ENCODE measurements at regions of chr7 and their contacts with region 1.

Region 1: GRCh38 chr7:43906331-43907010 is at the start of gene URGCP:
- DNase-seq: peak; percentile 26
- H3K4me3 ChIP-seq: peak within 1 kb of the TSS; percentile 59 to 72 (median 69)
- H3K27ac ChIP-seq: peak within 1 kb of the TSS; percentile 19
- H3K4me1 ChIP-seq: peaks cover 8% of the 10 kb centered on the region
- H3K27me3 ChIP-seq: no peaks in the 10 kb centered on the region
- CTCF ChIP-seq: no peak
- POLR2A ChIP-seq: peak; percentile 75
- total RNA-seq, gene URGCP: 25.3 and 26.8 TPM in 2 replicates

Region 2: GRCh38 chr7:43572516-43573049 is 333.9 kb before region 1 on chr7:
- CTCF ChIA-PET with region 1: no interaction called
- POLR2A ChIA-PET with region 1: no interaction called
- dilution Hi-C with region 1: no loop called
- intact Hi-C with region 1: loop called (anchors 5 kb)
- DNase-seq: peak; percentile 80
- H3K4me3 ChIP-seq: no peak overlapping the region
- H3K27ac ChIP-seq: peak overlapping the region; percentile 79
- H3K4me1 ChIP-seq: peaks cover 7% of the 10 kb centered on the region
- H3K27me3 ChIP-seq: no peaks in the 10 kb centered on the region
- CTCF ChIP-seq: no peak
- POLR2A ChIP-seq: peak; percentile 13

Region 3: GRCh38 chr7:43758029-43758821 is 148.2 kb before region 1 on chr7 and contains the start of gene BLVRA:
- CTCF ChIA-PET with region 1: no interaction called
- POLR2A ChIA-PET with region 1: no interaction called
- dilution Hi-C with region 1: no loop called
- intact Hi-C with region 1: no loop called
- DNase-seq: peak; percentile 56
- H3K4me3 ChIP-seq: peak within 1 kb of the TSS; percentile 49 to 72 (median 68)
- H3K27ac ChIP-seq: peak within 1 kb of the TSS; percentile 1
- H3K4me1 ChIP-seq: peaks cover 4% of the 10 kb centered on the region
- H3K27me3 ChIP-seq: peaks cover 0 to 3% of the 10 kb centered on the region in 2 experiments
- CTCF ChIP-seq: no peak
- POLR2A ChIP-seq: no peak
- total RNA-seq, gene BLVRA: 34.5 and 38.2 TPM in 2 replicates

Region 4: GRCh38 chr7:43869006-43869866 is 37.2 kb before region 1 on chr7 and contains the start of gene MRPS24:
- CTCF ChIA-PET with region 1: interaction called, 3 read pairs
- POLR2A ChIA-PET with region 1: interaction called, 3 read pairs
- dilution Hi-C with region 1: no loop called
- intact Hi-C with region 1: loop called (anchors 2 kb)
- DNase-seq: peak; percentile 91
- H3K4me3 ChIP-seq: peak within 1 kb of the TSS; percentile 52 to 71 (median 66)
- H3K27ac ChIP-seq: no peak within 1 kb of the TSS
- H3K4me1 ChIP-seq: peaks cover 11% of the 10 kb centered on the region
- H3K27me3 ChIP-seq: no peaks in the 10 kb centered on the region
- CTCF ChIP-seq: no peak
- POLR2A ChIP-seq: peak; percentile 95
- total RNA-seq, gene MRPS24: 105 and 110 TPM in 2 replicates

Region 5: DNA sequence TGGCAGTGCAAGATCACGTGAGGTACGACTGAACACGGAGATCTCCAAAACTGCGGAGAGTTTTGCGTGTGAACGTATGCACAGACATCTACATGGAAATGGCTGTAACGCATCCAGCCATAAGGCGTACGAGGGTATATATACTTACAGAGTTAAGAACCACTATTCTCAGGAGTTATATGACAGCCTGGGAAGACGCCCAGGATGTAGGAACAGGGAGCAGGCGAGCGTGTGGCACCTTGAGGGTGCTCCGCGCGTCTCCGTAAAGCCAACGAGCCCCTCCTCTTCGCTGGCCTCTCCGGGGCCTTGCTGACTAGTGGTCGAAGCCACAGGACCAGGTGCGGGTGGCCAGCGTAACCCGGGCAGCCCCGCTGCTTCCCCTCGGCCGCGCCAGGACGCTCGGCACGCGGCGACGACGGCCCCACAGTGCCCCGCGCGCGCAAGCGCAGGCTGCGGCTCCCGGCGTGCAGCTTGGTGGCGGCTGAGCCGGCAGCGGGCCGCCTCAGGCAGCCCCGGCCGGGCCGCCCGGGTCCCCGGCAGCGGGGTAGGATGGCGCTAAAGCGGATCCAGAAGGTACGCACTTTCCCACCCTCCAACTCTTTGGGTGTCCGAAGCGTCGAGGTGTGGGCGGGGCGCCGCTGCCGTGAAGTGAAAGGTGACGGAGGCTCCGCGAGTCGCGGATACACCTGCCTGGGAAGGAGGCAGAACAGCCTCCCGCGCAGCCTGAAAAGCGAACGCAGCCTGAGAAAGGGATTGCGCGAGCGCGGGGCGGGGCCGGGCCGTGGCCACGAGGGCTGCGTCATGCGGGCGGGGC is 19.7 kb after region 1 on chr7 and contains the start of gene UBE2D4:
- CTCF ChIA-PET with region 1: no interaction called
- POLR2A ChIA-PET with region 1: no interaction called
- dilution Hi-C with region 1: no loop called
- intact Hi-C with region 1: loop called (anchors 1 kb)
- DNase-seq: peak; percentile 82
- H3K4me3 ChIP-seq: peak within 1 kb of the TSS; percentile 17 to 70 (median 46)
- H3K27ac ChIP-seq: peak within 1 kb of the TSS; percentile 1
- H3K4me1 ChIP-seq: peaks cover 3% of the 10 kb centered on the region
- H3K27me3 ChIP-seq: no peaks in the 10 kb centered on the region
- CTCF ChIP-seq: no peak
- POLR2A ChIP-seq: peak; percentile 81
- total RNA-seq, gene UBE2D4: 11.3 and 11.7 TPM in 2 replicates

Measured in endothelial cell of umbilical vein (primary cell).